Transverse colon (tissue), 4 donors: ENCODE measurements at regions of chr4 and their contacts with region 1.

Region 1: DNA sequence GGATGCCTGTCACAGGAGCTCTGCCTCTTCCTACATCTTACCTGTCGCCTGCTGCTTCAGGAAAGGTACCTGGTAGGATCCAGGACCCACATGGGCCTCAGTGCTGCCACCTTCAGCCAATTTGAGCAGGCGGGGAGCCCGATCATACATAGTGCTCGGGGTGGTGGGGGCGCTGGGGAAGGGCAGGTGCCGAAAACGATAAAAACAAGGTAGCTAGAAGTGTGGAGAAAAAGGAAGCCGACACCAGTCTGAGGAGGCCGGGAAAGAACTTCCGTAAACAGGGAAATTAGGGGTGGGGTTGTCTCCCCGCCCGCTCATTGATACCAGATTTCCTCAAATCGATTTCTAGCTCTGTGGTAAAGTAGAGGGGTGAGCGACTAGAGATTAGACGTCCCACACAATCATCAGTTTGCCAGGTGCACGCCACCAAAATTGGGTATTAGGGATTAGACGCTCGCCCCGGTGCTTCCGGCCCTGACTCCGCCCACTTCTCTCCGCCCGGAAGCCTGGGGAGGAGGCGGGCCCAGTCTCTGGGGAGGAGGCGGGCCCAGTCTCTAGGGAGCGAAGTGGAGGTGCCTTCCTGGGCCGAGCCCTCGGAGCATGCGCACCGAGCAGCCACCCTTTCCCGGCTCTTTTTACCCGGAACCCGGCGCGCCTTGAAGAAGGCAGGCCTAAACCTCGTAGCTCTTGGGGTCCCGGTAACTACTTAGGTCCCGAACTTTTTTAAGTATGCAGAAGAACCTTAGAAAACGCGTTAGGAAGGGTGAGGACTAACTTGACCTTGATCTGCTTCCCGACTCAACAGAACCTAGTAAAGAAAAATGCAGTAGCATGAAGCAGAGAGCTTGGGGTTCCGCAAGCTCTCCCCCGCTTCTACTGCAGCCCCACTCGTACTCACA is at the start of gene STPG2:
- DNase-seq: peak; percentile 96
- H3K4me3 ChIP-seq: peak within 1 kb of the TSS; percentile 53 to 80 (median 64)
- H3K27ac ChIP-seq: peak within 1 kb of the TSS; percentile 87 to 94 (median 88)
- H3K4me1 ChIP-seq: peaks cover 0 to 14% (median 0%) of the 10 kb centered on the region in 4 donors
- H3K27me3 ChIP-seq: no peaks in the 10 kb centered on the region
- CTCF ChIP-seq: peak; percentile 34 to 66 (median 46)
- EP300 ChIP-seq: no peak
- POLR2A ChIP-seq: peak; percentile 62
- total RNA-seq, gene STPG2: 0.79 to 1.2 TPM in 2 of 4 donors, not detected in the others

Region 2: GRCh38 chr4:97027728-97028410 is 1115.4 kb before region 1 on chr4:
- in situ Hi-C with region 1: no loop called
- intact Hi-C with region 1: no loop called
- DNase-seq: no peak
- H3K4me3 ChIP-seq: no peak overlapping the region
- H3K27ac ChIP-seq: no peak overlapping the region
- H3K4me1 ChIP-seq: no peaks in the 10 kb centered on the region
- H3K27me3 ChIP-seq: no peaks in the 10 kb centered on the region
- CTCF ChIP-seq: no peak
- EP300 ChIP-seq: no peak
- POLR2A ChIP-seq: no peak

Region 3: GRCh38 chr4:98027827-98028226 is 115.4 kb before region 1 on chr4:
- in situ Hi-C with region 1: no loop called
- intact Hi-C with region 1: no loop called
- DNase-seq: no peak
- H3K4me3 ChIP-seq: no peak overlapping the region
- H3K27ac ChIP-seq: no peak overlapping the region
- H3K4me1 ChIP-seq: no peaks in the 10 kb centered on the region
- H3K27me3 ChIP-seq: no peaks in the 10 kb centered on the region
- CTCF ChIP-seq: no peak
- EP300 ChIP-seq: no peak
- POLR2A ChIP-seq: no peak

Region 4: GRCh38 chr4:98092833-98093439 is 50.3 kb before region 1 on chr4:
- in situ Hi-C with region 1: no loop called
- intact Hi-C with region 1: no loop called
- DNase-seq: no peak
- H3K4me3 ChIP-seq: no peak overlapping the region
- H3K27ac ChIP-seq: no peak overlapping the region
- H3K4me1 ChIP-seq: no peaks in the 10 kb centered on the region
- H3K27me3 ChIP-seq: no peaks in the 10 kb centered on the region
- CTCF ChIP-seq: peak in 2 of 5 experiments; percentile 5 to 17
- EP300 ChIP-seq: no peak
- POLR2A ChIP-seq: no peak

Region 5: DNA sequence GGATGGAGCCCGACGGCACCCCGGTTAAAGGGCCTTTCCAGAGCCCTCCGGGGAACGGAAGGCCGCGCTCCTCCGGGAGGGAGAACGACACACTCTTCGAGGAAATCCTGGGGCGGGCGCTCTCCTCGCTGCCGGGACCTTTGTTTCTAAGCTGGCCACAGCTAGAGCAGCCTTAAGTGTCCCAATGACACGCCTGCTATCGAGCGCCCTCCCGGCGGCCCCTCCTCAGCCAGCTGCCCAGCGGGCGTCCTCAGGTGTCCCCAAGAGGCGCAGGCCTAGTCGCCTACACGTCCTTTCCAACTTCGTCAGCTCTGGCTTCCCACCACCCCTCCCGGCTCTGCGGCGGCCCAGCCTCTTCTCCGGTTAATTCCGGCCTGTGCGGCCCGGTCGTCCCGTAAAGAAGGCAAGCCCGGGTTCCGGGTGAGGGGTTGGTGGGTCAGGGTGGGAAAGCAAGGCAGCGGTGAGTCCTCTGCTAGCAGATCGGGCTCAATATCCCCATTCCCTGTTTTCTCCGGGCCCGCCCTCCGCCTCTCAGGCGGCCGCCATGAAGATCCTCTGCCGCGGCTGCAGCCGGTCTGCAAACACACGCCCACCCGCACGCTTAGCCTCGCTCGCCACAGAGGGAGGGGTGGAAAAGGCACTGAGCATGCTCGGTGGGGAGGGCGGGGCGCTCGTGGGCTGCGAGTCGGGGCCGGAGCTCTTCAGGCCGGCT is 117.5 kb after region 1 on chr4:
- in situ Hi-C with region 1: no loop called
- intact Hi-C with region 1: loop called (anchors 10 kb)
- DNase-seq: peak; percentile 97
- H3K4me3 ChIP-seq: peak overlapping the region; percentile 50 to 90 (median 69)
- H3K27ac ChIP-seq: peak overlapping the region; percentile 92 to 99 (median 97)
- H3K4me1 ChIP-seq: peaks cover 4 to 31% (median 18%) of the 10 kb centered on the region in 4 donors
- H3K27me3 ChIP-seq: no peaks in the 10 kb centered on the region
- CTCF ChIP-seq: no peak
- EP300 ChIP-seq: no peak
- POLR2A ChIP-seq: peak; percentile 96

Region 6: GRCh38 chr4:98794565-98795205 is 651.4 kb after region 1 on chr4:
- in situ Hi-C with region 1: no loop called
- intact Hi-C with region 1: no loop called
- DNase-seq: no peak
- H3K4me3 ChIP-seq: no peak overlapping the region
- H3K27ac ChIP-seq: no peak overlapping the region
- H3K4me1 ChIP-seq: no peaks in the 10 kb centered on the region
- H3K27me3 ChIP-seq: no peaks in the 10 kb centered on the region
- CTCF ChIP-seq: no peak
- EP300 ChIP-seq: no peak
- POLR2A ChIP-seq: no peak